ENCODE measurements at regions of chr12 and their contacts with region 1.

Region 1: GRCh38 chr12:47079468-47079980 is at the starts of genes AMIGO2 and PCED1B:
- DNase-seq: peak; percentile 5
- H3K4me3 ChIP-seq: peak within 1 kb of the TSS; percentile 70 to 90 (median 83)
- H3K27ac ChIP-seq: peak within 1 kb of the TSS; percentile 78 to 96 (median 94)
- H3K4me1 ChIP-seq: peaks cover 0 to 66% (median 12%) of the 10 kb centered on the region in 3 donors
- H3K27me3 ChIP-seq: no peaks in the 10 kb centered on the region
- CTCF ChIP-seq: peak in 3 of 6 experiments; percentile 17 to 39 (median 17)
- POLR2A ChIP-seq: peak in 1 of 4 donors; percentile 28
- total RNA-seq, gene AMIGO2: 1.6 to 4.8 (median 2.9) TPM
- total RNA-seq, gene PCED1B: 1.2 to 2.5 (median 2.3) TPM in 3 of 4 donors, not detected in the other

Region 2: DNA sequence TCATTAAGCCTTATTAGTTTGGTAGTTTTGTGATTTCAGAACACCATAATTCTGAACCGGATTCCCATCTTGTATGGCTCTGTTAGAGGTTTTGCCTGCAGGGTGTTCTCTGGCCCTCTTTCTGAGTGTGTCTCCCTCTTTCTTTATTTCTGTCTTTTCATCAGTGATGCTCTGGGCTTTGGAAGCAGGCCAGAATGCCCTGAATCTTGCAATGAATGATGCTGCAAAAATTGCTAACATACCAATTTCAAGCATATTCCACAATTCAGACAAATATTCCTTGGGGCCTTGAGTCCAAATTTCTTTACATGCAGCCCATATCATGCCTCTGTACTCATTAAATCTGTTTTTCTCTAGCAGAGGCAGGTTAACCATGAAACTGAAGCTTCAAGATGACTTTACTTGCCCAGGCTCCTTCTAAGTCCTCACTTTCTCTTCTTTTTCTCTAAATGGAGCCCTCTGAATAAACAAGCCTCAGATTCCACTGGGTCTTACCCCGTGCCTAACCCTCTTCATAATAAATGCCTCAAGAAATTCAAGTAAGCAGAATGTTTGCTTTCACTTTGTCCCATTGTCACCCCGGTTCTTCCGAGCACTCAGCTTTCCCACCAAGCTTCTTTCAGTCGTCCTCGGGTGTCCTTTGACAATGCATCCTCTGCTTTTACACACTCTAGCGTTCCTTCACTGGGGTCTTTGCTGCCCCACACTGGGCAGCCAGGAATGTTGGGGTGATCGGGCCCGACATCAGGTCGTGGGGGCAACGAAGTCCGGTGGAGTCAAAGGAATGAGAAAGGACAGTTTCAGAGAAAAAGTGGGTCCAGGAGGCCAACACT is 174.9 kb before region 1 on chr12:
- intact Hi-C with region 1: no loop called
- DNase-seq: no peak
- H3K4me3 ChIP-seq: no peak overlapping the region
- H3K27ac ChIP-seq: no peak overlapping the region
- H3K4me1 ChIP-seq: peaks cover 0 to 36% (median 9%) of the 10 kb centered on the region in 3 donors
- H3K27me3 ChIP-seq: no peaks in the 10 kb centered on the region
- CTCF ChIP-seq: no peak
- POLR2A ChIP-seq: no peak

Region 3: GRCh38 chr12:47307680-47308399 is 228.3 kb after region 1 on chr12:
- intact Hi-C with region 1: loop called (anchors 5 kb)
- DNase-seq: no peak
- H3K4me3 ChIP-seq: peak overlapping the region in 3 of 4 donors; percentile 8 to 48 (median 8)
- H3K27ac ChIP-seq: no peak overlapping the region
- H3K4me1 ChIP-seq: peaks cover 0 to 14% (median 11%) of the 10 kb centered on the region in 3 donors
- H3K27me3 ChIP-seq: no peaks in the 10 kb centered on the region
- CTCF ChIP-seq: peak; percentile 43 to 86 (median 60)
- POLR2A ChIP-seq: no peak

Measured in esophagus squamous epithelium (tissue), 5 donors.